CD14-positive monocyte (primary cell): ENCODE measurements at regions of chr4 and their contacts with region 1.

Region 1: DNA sequence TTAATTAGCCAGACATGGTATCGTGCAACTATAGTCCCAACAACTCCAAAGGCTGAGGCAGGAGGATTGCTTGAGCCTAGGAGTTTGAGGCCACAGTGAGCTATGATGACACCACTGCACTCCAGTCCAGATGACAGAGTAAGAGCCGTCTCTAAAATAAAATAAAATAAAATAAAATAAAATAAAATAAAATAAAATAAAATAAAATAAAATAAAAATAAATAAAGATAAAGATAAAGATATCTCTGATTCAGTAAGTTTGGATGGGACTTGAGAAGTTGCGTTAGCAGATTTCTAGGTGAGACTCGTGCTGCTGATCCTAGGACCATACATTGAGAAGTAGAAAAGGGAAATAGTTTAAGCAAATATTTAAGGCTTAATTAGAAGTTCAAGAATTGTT is 254.8 kb upstream of the FAM241A start:
- DNase-seq: no peak
- H3K4me3 ChIP-seq: no peak overlapping the region
- H3K4me3 Mint-ChIP-seq: no peak overlapping the region
- H3K27ac ChIP-seq: no peak overlapping the region
- H3K27ac Mint-ChIP-seq: no peak overlapping the region
- H3K4me1 ChIP-seq: no peaks in the 10 kb centered on the region
- H3K4me1 Mint-ChIP-seq: no peaks in the 10 kb centered on the region
- H3K27me3 ChIP-seq: no peaks in the 10 kb centered on the region
- H3K27me3 Mint-ChIP-seq: peaks cover 2 to 5% (median 3%) of the 10 kb centered on the region in 3 donors
- CTCF ChIP-seq: no peak

Region 2: DNA sequence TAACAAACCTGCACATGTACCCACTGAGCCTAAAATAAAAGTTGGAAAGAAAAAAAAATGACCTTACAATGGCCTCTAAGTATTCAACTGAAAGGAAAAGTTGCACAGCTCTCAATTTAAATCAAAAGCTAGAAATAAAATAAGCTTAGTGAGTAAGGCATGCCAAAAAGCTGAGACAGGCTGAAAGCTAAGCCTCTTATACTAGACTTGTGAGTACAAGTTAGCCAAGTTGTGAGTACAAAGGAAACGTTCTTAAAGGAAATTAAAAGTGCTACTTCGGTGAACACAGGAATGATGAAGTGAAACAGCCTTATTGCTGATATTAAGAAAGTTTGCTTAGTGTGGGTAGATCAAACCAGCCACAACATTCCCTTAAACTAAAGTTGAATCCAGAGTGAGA is 559.6 kb before region 1 on chr4:
- intact Hi-C with region 1: loop called in 1 of 2 experiments (anchors 5 kb)
- DNase-seq: no peak
- H3K4me3 ChIP-seq: no peak overlapping the region
- H3K4me3 Mint-ChIP-seq: no peak overlapping the region
- H3K27ac ChIP-seq: no peak overlapping the region
- H3K27ac Mint-ChIP-seq: no peak overlapping the region
- H3K4me1 ChIP-seq: no peaks in the 10 kb centered on the region
- H3K4me1 Mint-ChIP-seq: no peaks in the 10 kb centered on the region
- H3K27me3 ChIP-seq: no peaks in the 10 kb centered on the region
- H3K27me3 Mint-ChIP-seq: peaks cover 0 to 3% (median 0%) of the 10 kb centered on the region in 3 donors
- CTCF ChIP-seq: no peak

Region 3: GRCh38 chr4:112145326-112145819 is 255.0 kb after region 1 on chr4 and contains the start of gene FAM241A:
- intact Hi-C with region 1: no loop called
- DNase-seq: peak; percentile 71 to 76 (median 73)
- H3K4me3 ChIP-seq: peak within 1 kb of the TSS; percentile 90 to 100 (median 100)
- H3K4me3 Mint-ChIP-seq: peak within 1 kb of the TSS; percentile 97
- H3K27ac ChIP-seq: peak within 1 kb of the TSS; percentile 93 to 95
- H3K27ac Mint-ChIP-seq: peak within 1 kb of the TSS; percentile 91 to 96 (median 95)
- H3K4me1 ChIP-seq: peaks cover 16 to 32% of the 10 kb centered on the region in 2 donors
- H3K4me1 Mint-ChIP-seq: peaks cover 37% of the 10 kb centered on the region
- H3K27me3 ChIP-seq: no peaks in the 10 kb centered on the region
- H3K27me3 Mint-ChIP-seq: peaks cover 0 to 5% (median 0%) of the 10 kb centered on the region in 3 donors
- CTCF ChIP-seq: no peak
- polyA plus RNA-seq, gene FAM241A: 1.8 to 5.5 (median 4.8) TPM